GM12878 (cell line): ENCODE measurements at regions of chr6 and their contacts with region 1.

Region 1: DNA sequence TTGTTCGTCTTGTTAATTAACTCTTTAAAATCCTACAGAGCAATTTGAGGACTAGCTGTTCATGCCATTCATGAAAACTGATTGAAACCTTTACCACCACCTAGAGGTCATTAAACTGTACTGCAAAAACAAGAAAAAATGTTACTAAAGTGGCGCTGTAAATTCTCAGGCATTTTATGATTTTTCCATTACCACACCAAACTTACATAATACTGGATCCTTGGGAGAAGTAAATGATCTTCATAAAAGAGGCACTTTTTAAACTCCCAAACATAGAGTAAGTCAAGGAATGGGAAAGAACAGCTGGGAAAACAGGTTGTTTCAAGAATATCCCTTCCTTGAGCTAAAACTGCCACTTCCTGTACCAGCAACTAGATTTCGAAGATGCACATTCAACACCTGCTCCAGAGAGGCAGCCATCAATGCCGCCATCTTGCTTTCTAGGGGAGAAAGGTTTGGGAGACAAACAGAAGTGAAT is 54.3 kb downstream of the MYLIP start:
- DNase-seq: peak; percentile 35
- ATAC-seq: peak; percentile 65
- H3K4me3 ChIP-seq: no peak overlapping the region
- H3K27ac ChIP-seq: no peak overlapping the region
- H3K4me1 ChIP-seq: no peaks in the 10 kb centered on the region
- H3K27me3 ChIP-seq: no peaks in the 10 kb centered on the region; a peak in 1 of 4 replicates
- CTCF ChIP-seq: peak; percentile 61 to 79 (median 63)
- EP300 ChIP-seq: no peak
- POLR2A ChIP-seq: no peak
- RAD21 ChIP-seq: peak; percentile 78

Region 2: GRCh38 chr6:15662326-15663129 is 520.7 kb before region 1 on chr6 and contains the start of gene DTNBP1:
- CTCF ChIA-PET with region 1: interaction called, 14 read pairs
- POLR2A ChIA-PET with region 1: interaction called, 3 read pairs
- RAD21 ChIA-PET with region 1: interaction called, 6 read pairs
- SMC1A ChIA-PET with region 1: interaction called, 5 read pairs
- in situ Hi-C with region 1: no loop called
- intact Hi-C with region 1: no loop called
- DNase-seq: peak; percentile 40
- ATAC-seq: peak; percentile 85
- H3K4me3 ChIP-seq: peak within 1 kb of the TSS; percentile 90
- H3K27ac ChIP-seq: peak within 1 kb of the TSS; percentile 76
- H3K4me1 ChIP-seq: peaks cover 26% of the 10 kb centered on the region
- H3K27me3 ChIP-seq: no peaks in the 10 kb centered on the region; a peak in 1 of 4 replicates
- CTCF ChIP-seq: no peak
- EP300 ChIP-seq: no peak
- POLR2A ChIP-seq: peak; percentile 64
- RAD21 ChIP-seq: no peak
- polyA plus RNA-seq, gene DTNBP1: 10.9 to 20.2 TPM

Region 3: GRCh38 chr6:15770347-15771143 is 412.7 kb before region 1 on chr6:
- CTCF ChIA-PET with region 1: interaction called, 6 read pairs
- POLR2A ChIA-PET with region 1: interaction called, 3 read pairs
- RAD21 ChIA-PET with region 1: interaction called, 5 read pairs
- SMC1A ChIA-PET with region 1: interaction called, 13 read pairs
- in situ Hi-C with region 1: no loop called
- intact Hi-C with region 1: no loop called
- DNase-seq: peak; percentile 62
- ATAC-seq: peak; percentile 88
- H3K4me3 ChIP-seq: no peak overlapping the region
- H3K27ac ChIP-seq: peak overlapping the region; percentile 38
- H3K4me1 ChIP-seq: peaks cover 7% of the 10 kb centered on the region
- H3K27me3 ChIP-seq: no peaks in the 10 kb centered on the region
- CTCF ChIP-seq: peak; percentile 24 to 32 (median 30); a peak in 5 of 6 replicates
- EP300 ChIP-seq: peak; percentile 32 to 76; a peak in 2 of 4 replicates
- POLR2A ChIP-seq: no peak
- RAD21 ChIP-seq: peak; percentile 44

Region 4: DNA sequence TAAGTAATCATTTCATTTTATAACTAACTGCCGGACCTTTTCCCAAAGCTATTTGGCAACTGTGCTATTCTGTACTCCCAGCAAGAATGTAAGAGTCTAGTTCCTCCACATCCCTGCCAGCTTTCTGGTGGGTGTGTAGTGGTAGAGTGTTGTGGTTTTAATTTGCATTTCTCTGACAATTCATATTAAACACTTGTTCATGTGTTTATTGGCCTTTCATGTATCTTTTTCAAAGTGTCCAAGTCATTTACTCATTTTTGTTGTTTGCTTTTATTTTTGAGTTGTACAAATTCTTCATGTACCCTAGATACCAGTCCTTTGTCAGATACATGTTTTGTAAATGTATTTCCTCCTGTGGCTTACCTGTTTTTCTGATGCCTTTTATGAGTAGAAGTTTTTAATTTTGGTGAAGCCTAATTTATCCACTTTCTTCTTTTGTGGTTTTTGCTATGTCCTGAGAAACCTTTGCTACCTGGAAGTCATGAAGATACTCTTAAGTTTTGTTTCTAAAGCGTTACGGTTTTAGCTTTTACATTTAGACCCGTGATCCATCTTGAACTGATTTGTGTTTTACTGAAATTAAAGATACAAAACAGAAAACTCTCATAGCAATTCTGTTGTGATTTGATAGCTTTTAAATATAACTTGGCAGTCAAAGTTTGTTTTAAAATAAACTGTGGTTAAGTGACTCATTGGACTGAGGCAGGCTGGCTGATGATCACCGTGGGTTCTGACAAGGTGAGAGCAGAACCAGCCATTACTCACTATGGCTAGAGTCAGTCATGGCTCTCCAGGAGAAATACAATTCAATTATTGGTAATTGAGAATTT is 46.4 kb before region 1 on chr6:
- CTCF ChIA-PET with region 1: interaction called, 86 read pairs
- POLR2A ChIA-PET with region 1: interaction called, 4 read pairs
- RAD21 ChIA-PET with region 1: interaction called, 42 read pairs
- SMC1A ChIA-PET with region 1: interaction called, 93 read pairs
- in situ Hi-C with region 1: no loop called
- intact Hi-C with region 1: no loop called
- DNase-seq: no peak
- ATAC-seq: peak; percentile 53
- H3K4me3 ChIP-seq: peak overlapping the region; percentile 47; the same call in 1 of the 2 replicates
- H3K27ac ChIP-seq: no peak overlapping the region
- H3K4me1 ChIP-seq: peaks cover 6% of the 10 kb centered on the region; the same call in 1 of the 2 replicates
- H3K27me3 ChIP-seq: no peaks in the 10 kb centered on the region
- CTCF ChIP-seq: no peak
- EP300 ChIP-seq: no peak
- POLR2A ChIP-seq: no peak
- RAD21 ChIP-seq: no peak

Region 5: DNA sequence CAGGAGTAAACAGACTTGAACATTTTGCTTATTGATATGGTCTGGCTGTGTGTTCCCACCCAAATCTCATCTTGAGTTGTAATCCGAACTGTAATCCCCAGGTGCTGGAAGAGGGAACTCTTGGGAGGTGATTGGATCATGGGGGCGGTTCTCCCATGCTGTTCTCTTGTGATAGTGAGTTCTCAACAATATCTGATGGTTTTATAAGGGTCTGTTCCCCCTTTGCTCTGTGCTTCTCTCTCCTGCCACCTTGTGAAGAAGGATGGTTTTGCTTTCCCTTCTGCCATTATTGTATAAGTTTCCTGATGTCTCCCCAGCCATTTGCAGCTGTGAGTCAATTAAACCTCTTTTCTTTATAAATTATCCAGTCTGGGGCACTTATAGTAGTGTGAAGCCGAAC is 14.4 kb before region 1 on chr6:
- CTCF ChIA-PET with region 1: interaction called, 43 read pairs
- POLR2A ChIA-PET with region 1: interaction called, 5 read pairs
- RAD21 ChIA-PET with region 1: interaction called, 28 read pairs
- SMC1A ChIA-PET with region 1: interaction called, 17 read pairs
- in situ Hi-C with region 1: no loop called
- intact Hi-C with region 1: no loop called
- DNase-seq: peak; percentile 32
- ATAC-seq: peak; percentile 86
- H3K4me3 ChIP-seq: no peak overlapping the region
- H3K27ac ChIP-seq: no peak overlapping the region
- H3K4me1 ChIP-seq: peaks cover 13% of the 10 kb centered on the region
- H3K27me3 ChIP-seq: no peaks in the 10 kb centered on the region
- CTCF ChIP-seq: peak; percentile 56 to 66 (median 65)
- EP300 ChIP-seq: no peak
- POLR2A ChIP-seq: no peak
- RAD21 ChIP-seq: peak; percentile 87